Activated CD8-positive, alpha-beta memory T cell treated with anti-CD3 and anti-CD28 coated beads, Interleukin-2, amount 10 ng/mL, durations not matched to agents 7 days and 5 days (primary cell): ENCODE measurements at regions of chr19 and their contacts with region 1.

Region 1: DNA sequence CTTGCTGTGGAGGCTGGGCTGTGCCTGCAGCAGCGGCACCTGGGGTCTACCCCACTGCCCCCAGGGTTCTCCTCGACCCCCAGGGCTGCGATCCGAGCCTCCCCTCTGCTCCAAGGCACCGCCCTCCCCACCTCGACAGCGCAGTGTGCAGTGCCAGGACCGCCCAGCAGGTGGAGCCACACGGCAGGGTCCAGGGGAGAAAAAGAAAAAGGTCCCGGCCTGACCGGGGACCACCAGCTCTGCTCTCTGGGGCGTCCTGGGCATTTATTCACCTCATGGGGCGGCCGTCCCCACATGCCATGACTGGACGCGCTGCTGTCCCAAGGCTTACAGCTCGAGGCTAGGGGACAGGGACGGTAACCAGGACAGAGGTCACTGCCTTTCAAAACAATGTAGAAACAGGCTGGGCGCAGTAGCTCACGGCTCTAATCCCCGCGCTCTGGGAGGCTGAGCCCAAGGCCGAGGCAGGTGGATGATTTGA is 10.6 kb downstream of the REXO1 start:
- DNase-seq: peak; percentile 71
- ATAC-seq: peak; percentile 64
- H3K4me3 Mint-ChIP-seq: no peak overlapping the region
- H3K27ac Mint-ChIP-seq: peak overlapping the region; percentile 32
- H3K4me1 Mint-ChIP-seq: peaks cover 2% of the 10 kb centered on the region
- H3K27me3 Mint-ChIP-seq: no peaks in the 10 kb centered on the region

Region 2: GRCh38 chr19:1847684-1848398 is 10.2 kb after region 1 on chr19:
- CTCF ChIA-PET with region 1: interaction called, 15 read pairs
- DNase-seq: peak; percentile 66
- ATAC-seq: peak; percentile 51
- H3K4me3 Mint-ChIP-seq: peak overlapping the region; percentile 81
- H3K27ac Mint-ChIP-seq: peak overlapping the region; percentile 94
- H3K4me1 Mint-ChIP-seq: peaks cover 44% of the 10 kb centered on the region
- H3K27me3 Mint-ChIP-seq: no peaks in the 10 kb centered on the region

Region 3: GRCh38 chr19:1855040-1855827 is 17.6 kb after region 1 on chr19:
- CTCF ChIA-PET with region 1: interaction called, 15 read pairs
- DNase-seq: peak; percentile 95
- ATAC-seq: peak; percentile 84
- H3K4me3 Mint-ChIP-seq: peak overlapping the region; percentile 75
- H3K27ac Mint-ChIP-seq: peak overlapping the region; percentile 95
- H3K4me1 Mint-ChIP-seq: peaks cover 49% of the 10 kb centered on the region
- H3K27me3 Mint-ChIP-seq: no peaks in the 10 kb centered on the region

Region 4: GRCh38 chr19:1875646-1876495 is 38.2 kb after region 1 on chr19:
- CTCF ChIA-PET with region 1: no interaction called
- DNase-seq: peak; percentile 93
- ATAC-seq: peak; percentile 87
- H3K4me3 Mint-ChIP-seq: peak overlapping the region; percentile 99
- H3K27ac Mint-ChIP-seq: peak overlapping the region; percentile 98
- H3K4me1 Mint-ChIP-seq: peaks cover 31% of the 10 kb centered on the region
- H3K27me3 Mint-ChIP-seq: no peaks in the 10 kb centered on the region